ENCODE measurements at regions of chr2 and their contacts with region 1.

Region 1: GRCh38 chr2:86195055-86195807 is at the start of gene IMMT:
- DNase-seq: peak; percentile 91 to 99 (median 97)

Region 2: DNA sequence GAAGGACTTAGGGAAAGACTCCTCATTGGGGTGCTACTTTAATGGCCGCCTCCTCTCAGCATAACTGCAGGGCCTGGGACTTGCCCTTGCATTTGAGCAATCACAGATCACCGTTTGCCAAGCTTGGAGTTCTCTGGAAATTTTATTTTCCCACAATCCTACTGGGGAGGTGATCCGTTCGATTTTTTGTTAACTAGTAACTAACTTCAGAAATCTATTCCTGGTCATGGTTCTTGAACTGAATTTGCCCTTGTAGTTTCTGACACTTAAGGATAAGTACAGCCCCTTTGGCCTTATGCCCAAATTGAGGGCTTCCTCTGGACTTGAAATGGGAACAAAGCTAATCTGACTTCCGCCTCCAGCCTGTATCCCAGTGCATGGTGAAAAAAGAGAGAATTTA is 246.0 kb before region 1 on chr2:
- intact Hi-C with region 1: no loop called
- DNase-seq: peak in 1 of 42 donors; percentile 46

Region 3: DNA sequence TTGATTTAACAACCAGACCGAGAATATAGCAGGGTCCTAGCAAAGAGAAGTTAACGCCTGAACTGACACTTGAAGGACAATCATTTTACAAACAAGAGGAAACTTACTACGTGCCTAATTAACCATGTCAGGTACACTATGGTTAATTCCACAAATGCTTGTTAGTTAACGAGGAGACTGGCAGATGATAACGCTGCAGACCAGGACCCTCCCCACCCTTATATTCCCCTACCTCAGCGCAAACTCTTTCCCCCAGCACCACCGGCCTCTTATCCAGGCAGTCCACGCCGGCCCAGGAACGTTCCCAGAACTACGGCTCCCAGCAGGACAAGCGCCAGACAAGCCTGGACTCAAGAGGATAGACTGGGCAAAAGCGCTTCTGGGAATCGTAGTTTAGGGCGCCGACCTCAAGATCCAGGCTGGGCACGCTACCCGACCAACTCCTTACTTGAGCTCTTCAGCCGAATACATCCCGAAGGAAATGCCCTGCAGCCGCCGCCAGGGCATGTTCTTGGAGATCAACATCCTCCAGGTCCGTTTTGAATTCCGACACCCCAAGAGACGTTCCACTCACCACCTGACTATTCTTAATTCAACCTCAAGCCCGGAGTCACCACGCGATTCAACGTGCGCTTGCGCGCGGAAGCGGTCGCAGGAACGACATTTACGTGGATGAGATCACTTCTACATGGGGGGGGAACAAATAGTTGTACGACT is 89.8 kb before region 1 on chr2 and contains the start of gene POLR1A:
- intact Hi-C with region 1: loop called (anchors 10 kb)
- DNase-seq: peak; percentile 82 to 98 (median 94)

Region 4: GRCh38 chr2:86440631-86441391 is 245.6 kb after region 1 on chr2 and contains the start of gene KDM3A:
- intact Hi-C with region 1: loop called (anchors 10 kb)
- DNase-seq: peak; percentile 96 to 100 (median 99)